Psoas muscle (tissue), 8 donors: ENCODE measurements at regions of chr9 and their contacts with region 1.

Region 1: GRCh38 chr9:104780799-104781395 is 17.0 kb downstream of the NIPSNAP3B start:
- DNase-seq: no peak
- ATAC-seq: peak in 1 of 4 donors; percentile 47
- H3K4me3 ChIP-seq: no peak overlapping the region
- H3K27ac ChIP-seq: no peak overlapping the region
- H3K4me1 ChIP-seq: peaks cover 33% of the 10 kb centered on the region
- H3K27me3 ChIP-seq: no peaks in the 10 kb centered on the region
- CTCF ChIP-seq: peak; percentile 32

Region 2: DNA sequence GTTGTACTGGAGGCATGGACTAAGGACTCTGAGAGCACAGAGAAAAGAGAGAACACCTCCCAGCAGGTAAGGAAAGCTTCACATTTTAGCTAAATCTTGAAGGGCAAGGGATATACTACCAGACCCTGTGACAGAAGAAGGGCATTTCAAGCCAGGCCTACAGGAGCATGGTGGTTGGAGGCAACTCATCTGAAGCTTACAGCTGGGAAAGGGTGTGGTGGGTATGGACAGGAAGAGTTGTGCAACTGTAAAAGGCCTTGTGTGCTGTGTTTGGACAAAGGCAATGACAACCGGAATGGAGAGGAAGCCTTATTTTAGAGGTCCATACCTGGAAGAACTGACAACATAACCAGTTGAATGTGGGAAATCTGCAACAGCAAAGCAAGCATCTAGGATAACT is 14.2 kb after region 1 on chr9:
- intact Hi-C with region 1: no loop called
- DNase-seq: no peak
- ATAC-seq: peak in 2 of 4 donors; percentile 26 to 56
- H3K4me3 ChIP-seq: no peak overlapping the region
- H3K27ac ChIP-seq: peak overlapping the region; percentile 21
- H3K4me1 ChIP-seq: no peaks in the 10 kb centered on the region
- H3K27me3 ChIP-seq: no peaks in the 10 kb centered on the region
- CTCF ChIP-seq: no peak

Region 3: GRCh38 chr9:104836235-104836634 is 55.3 kb after region 1 on chr9:
- intact Hi-C with region 1: loop called in 1 of 2 experiments (anchors 10 kb)
- DNase-seq: no peak
- ATAC-seq: no peak
- H3K4me3 ChIP-seq: no peak overlapping the region
- H3K27ac ChIP-seq: peak overlapping the region; percentile 47
- H3K4me1 ChIP-seq: no peaks in the 10 kb centered on the region
- H3K27me3 ChIP-seq: no peaks in the 10 kb centered on the region
- CTCF ChIP-seq: no peak